ENCODE measurements at regions of chr3 and their contacts with region 1.

Region 1: GRCh38 chr3:8239718-8240695 is 261.6 kb upstream of the LMCD1 start:
- DNase-seq: peak; percentile 22
- ATAC-seq: peak; percentile 95
- H3K4me3 Mint-ChIP-seq: no peak overlapping the region
- H3K27ac Mint-ChIP-seq: no peak overlapping the region
- H3K4me1 Mint-ChIP-seq: peaks cover 26% of the 10 kb centered on the region
- H3K27me3 Mint-ChIP-seq: no peaks in the 10 kb centered on the region
- CTCF ChIP-seq: peak; percentile 86

Region 2: GRCh38 chr3:8111069-8111798 is 128.8 kb before region 1 on chr3:
- CTCF ChIA-PET with region 1: interaction called, 35 read pairs
- POLR2A ChIA-PET with region 1: no interaction called
- DNase-seq: peak; percentile 78
- ATAC-seq: peak; percentile 90
- H3K4me3 Mint-ChIP-seq: no peak overlapping the region
- H3K27ac Mint-ChIP-seq: no peak overlapping the region
- H3K4me1 Mint-ChIP-seq: peaks cover 36% of the 10 kb centered on the region
- H3K27me3 Mint-ChIP-seq: no peaks in the 10 kb centered on the region
- CTCF ChIP-seq: peak; percentile 72

Region 3: DNA sequence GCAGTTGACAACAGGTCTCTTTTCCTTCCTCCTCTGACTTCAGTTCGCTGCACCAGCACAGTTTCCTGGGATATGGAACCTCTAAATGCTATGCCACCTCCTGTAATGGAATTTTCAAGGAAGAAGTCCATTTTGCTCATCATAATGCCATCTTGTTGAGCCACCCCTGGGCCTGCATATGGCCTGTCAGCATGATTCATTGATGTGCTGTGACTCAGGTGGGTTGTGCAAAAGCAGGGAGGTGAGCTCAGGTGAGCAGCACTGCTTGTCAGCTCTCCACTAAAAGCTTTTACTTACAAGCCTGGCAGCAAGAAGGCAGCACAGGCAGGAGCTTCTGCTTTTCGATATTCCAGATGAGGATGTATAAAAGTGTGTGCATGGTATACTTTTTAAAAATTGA is 14.5 kb after region 1 on chr3:
- CTCF ChIA-PET with region 1: interaction called, 36 read pairs
- POLR2A ChIA-PET with region 1: interaction called, 3 read pairs
- DNase-seq: no peak
- ATAC-seq: no peak
- H3K4me3 Mint-ChIP-seq: no peak overlapping the region
- H3K27ac Mint-ChIP-seq: no peak overlapping the region
- H3K4me1 Mint-ChIP-seq: peaks cover 7% of the 10 kb centered on the region
- H3K27me3 Mint-ChIP-seq: no peaks in the 10 kb centered on the region
- CTCF ChIP-seq: no peak

Region 4: DNA sequence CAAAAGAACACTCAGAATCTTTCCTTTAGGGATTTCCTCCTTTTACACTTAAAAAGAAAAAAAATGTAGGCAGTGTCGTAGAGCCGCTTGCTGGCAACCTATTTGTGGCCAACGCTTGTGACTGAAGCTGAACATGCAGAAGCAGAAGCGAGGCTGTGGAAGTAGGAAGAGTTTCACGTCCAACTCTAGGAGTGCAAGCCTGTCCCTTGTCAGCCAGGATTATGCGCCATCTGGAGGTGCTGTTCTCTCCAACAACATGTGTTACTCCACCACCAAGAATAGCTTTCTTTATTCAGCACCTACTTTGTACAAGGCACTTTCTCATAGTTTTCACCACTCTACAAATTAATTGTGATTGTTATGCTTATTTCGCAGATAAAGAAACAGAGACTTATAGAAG is 38.4 kb after region 1 on chr3:
- CTCF ChIA-PET with region 1: interaction called, 11 read pairs
- POLR2A ChIA-PET with region 1: no interaction called
- DNase-seq: no peak
- ATAC-seq: peak; percentile 45
- H3K4me3 Mint-ChIP-seq: no peak overlapping the region
- H3K27ac Mint-ChIP-seq: no peak overlapping the region
- H3K4me1 Mint-ChIP-seq: peaks cover 42% of the 10 kb centered on the region
- H3K27me3 Mint-ChIP-seq: no peaks in the 10 kb centered on the region; the same call in 1 of the 2 replicates
- CTCF ChIP-seq: no peak

Region 5: GRCh38 chr3:8416965-8417364 is 177.0 kb after region 1 on chr3:
- CTCF ChIA-PET with region 1: interaction called, 16 read pairs
- POLR2A ChIA-PET with region 1: no interaction called
- DNase-seq: peak; percentile 18
- ATAC-seq: peak; percentile 81
- H3K4me3 Mint-ChIP-seq: no peak overlapping the region
- H3K27ac Mint-ChIP-seq: no peak overlapping the region
- H3K4me1 Mint-ChIP-seq: 0 out of 2 replicates have a peak, but pooled peaks cover 4% of the 10 kb centered on the region
- H3K27me3 Mint-ChIP-seq: no peaks in the 10 kb centered on the region
- CTCF ChIP-seq: no peak